ENCODE measurements at regions of chr10 and their contacts with region 1.

Region 1: GRCh38 chr10:74058658-74059057 is 60.7 kb downstream of the VCL start:
- DNase-seq: peak; percentile 67 to 74
- H3K4me3 ChIP-seq: no peak overlapping the region
- H3K4me3 Mint-ChIP-seq: peak overlapping the region; percentile 62
- H3K27ac Mint-ChIP-seq: peak overlapping the region; percentile 70
- H3K4me1 ChIP-seq: peaks cover 49% of the 10 kb centered on the region
- H3K4me1 Mint-ChIP-seq: peaks cover 26% of the 10 kb centered on the region
- H3K27me3 ChIP-seq: no peaks in the 10 kb centered on the region
- H3K27me3 Mint-ChIP-seq: no peaks in the 10 kb centered on the region
- CTCF ChIP-seq: peak in 1 of 2 experiments; percentile 57

Region 2: GRCh38 chr10:73956476-73957359 is 101.9 kb before region 1 on chr10:
- CTCF ChIA-PET with region 1: interaction called, 3 read pairs
- POLR2A ChIA-PET with region 1: no interaction called
- intact Hi-C with region 1: loop called (anchors 1 kb)
- DNase-seq: no peak
- H3K4me3 ChIP-seq: no peak overlapping the region
- H3K4me3 Mint-ChIP-seq: no peak overlapping the region
- H3K27ac Mint-ChIP-seq: no peak overlapping the region
- H3K4me1 ChIP-seq: no peaks in the 10 kb centered on the region; the same call in 1 of the 2 replicates
- H3K4me1 Mint-ChIP-seq: no peaks in the 10 kb centered on the region
- H3K27me3 ChIP-seq: no peaks in the 10 kb centered on the region
- H3K27me3 Mint-ChIP-seq: no peaks in the 10 kb centered on the region
- CTCF ChIP-seq: no peak

Region 3: DNA sequence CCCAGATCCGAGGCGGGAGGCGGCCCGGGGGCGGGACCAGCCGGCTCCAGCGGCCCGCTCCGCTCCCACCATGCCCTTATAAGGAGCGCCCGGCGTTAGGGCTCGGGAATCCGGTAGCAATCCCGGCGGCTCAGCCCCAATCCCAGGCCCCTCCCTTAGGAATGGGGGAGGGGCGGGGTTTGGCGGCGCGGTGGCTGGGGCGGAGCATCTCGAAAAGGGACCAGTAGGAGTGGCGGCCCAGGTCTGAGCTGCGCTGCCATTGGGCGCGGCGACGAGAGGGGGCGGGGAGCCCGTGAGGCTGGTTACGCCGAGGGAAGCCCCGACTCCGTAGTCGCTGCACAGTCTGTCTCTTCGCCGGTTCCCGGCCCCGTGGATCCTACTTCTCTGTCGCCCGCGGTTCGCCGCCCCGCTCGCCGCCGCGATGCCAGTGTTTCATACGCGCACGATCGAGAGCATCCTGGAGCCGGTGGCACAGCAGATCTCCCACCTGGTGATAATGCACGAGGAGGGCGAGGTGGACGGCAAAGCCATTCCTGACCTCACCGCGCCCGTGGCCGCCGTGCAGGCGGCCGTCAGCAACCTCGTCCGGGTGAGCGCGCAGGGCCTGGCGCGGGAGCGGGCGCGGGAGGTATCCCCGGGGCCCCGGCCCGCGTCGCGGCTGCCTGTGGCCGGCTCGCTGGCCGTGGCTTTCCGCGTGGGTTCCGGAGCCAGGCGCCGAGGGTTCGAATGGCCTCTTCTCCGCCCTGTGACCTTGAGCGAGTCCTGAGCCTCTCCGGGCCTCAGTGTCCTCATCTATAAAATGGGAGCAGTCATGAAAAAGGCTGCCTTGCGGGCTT is 60.7 kb before region 1 on chr10 and contains the start of gene VCL:
- CTCF ChIA-PET with region 1: interaction called, 7 read pairs
- POLR2A ChIA-PET with region 1: interaction called, 19 read pairs
- intact Hi-C with region 1: loop called (anchors 1 kb)
- DNase-seq: peak; percentile 99 to 100
- H3K4me3 ChIP-seq: peak within 1 kb of the TSS; percentile 100
- H3K4me3 Mint-ChIP-seq: peak within 1 kb of the TSS; percentile 98
- H3K27ac Mint-ChIP-seq: peak within 1 kb of the TSS; percentile 96
- H3K4me1 ChIP-seq: peaks cover 32% of the 10 kb centered on the region
- H3K4me1 Mint-ChIP-seq: peaks cover 27% of the 10 kb centered on the region
- H3K27me3 ChIP-seq: no peaks in the 10 kb centered on the region
- H3K27me3 Mint-ChIP-seq: no peaks in the 10 kb centered on the region
- CTCF ChIP-seq: no peak
- total RNA-seq, gene VCL: 92.2 and 113 TPM in 2 replicates